BJ (cell line): ENCODE measurements at regions of chr16 and their contacts with region 1.

Region 1: GRCh38 chr16:54459509-54460262 is 173.1 kb upstream of the IRX3 start:
- DNase-seq: peak; percentile 51
- H3K4me3 ChIP-seq: no peak overlapping the region
- H3K27me3 ChIP-seq: peaks cover 5% of the 10 kb centered on the region
- CTCF ChIP-seq: no peak

Region 2: GRCh38 chr16:53198933-53199332 is 1260.8 kb before region 1 on chr16:
- CTCF ChIA-PET with region 1: no interaction called
- POLR2A ChIA-PET with region 1: interaction called, 16 read pairs
- DNase-seq: no peak
- H3K4me3 ChIP-seq: no peak overlapping the region
- H3K27me3 ChIP-seq: no peaks in the 10 kb centered on the region
- CTCF ChIP-seq: no peak